Activated CD4-positive, alpha-beta memory T cell treated with anti-CD3 and anti-CD28 coated beads, Interleukin-2, amount 10 ng/mL, durations not matched to agents 7 days and 5 days (primary cell): ENCODE measurements at regions of chr1 and their contacts with region 1.

Region 1: DNA sequence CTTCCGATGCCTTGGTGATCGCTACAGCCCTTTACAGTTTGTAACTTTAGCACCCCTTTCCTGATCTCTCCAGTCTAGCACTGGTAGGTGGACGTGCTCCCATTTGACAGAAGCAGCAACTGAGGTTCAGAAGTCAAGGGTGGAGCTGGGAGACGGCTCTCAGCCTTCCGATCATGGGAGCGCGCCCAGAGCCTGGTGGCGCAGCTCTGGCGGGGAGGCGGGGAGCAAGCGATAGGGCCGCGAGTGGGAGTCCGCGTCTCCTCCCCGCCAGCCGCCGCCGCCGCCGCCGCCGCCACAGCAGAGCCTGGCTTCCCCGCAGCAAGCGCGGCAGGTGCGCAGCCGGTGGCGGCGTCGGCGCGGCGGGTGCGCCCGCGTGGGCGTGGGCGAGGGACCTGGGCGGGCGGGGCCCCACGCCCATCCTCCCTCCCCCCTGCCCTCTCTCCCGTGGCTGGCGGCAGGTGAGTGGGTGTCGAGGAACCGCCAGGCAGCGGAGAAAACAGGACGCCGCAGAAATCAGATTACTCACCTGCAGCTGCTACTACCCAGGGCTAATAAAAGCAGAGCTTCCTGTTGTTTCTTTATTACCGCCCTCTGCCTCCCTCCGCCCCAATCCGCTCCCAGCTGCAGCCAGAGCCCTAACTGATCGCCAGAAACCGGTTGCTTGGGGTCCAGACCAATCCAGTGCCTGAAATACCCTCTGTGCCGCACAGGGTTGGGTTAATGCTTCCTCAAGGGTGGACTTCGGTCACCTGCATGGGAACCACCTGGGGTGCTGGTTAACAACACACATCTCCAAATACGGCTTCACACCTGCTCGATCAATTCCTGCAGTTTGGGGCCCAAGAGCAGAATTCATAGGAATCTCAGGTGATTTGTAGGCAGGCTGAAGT is 60.2 kb upstream of the ID3 start:
- DNase-seq: peak; percentile 76
- H3K4me3 Mint-ChIP-seq: peak overlapping the region; percentile 67
- H3K27ac Mint-ChIP-seq: peak overlapping the region; percentile 70
- H3K4me1 Mint-ChIP-seq: peaks cover 53% of the 10 kb centered on the region
- H3K27me3 Mint-ChIP-seq: peaks cover 15% of the 10 kb centered on the region

Region 2: GRCh38 chr1:23585447-23586015 is 34.0 kb before region 1 on chr1:
- CTCF ChIA-PET with region 1: no interaction called
- POLR2A ChIA-PET with region 1: no interaction called
- DNase-seq: no peak
- H3K4me3 Mint-ChIP-seq: no peak overlapping the region
- H3K27ac Mint-ChIP-seq: no peak overlapping the region
- H3K4me1 Mint-ChIP-seq: peaks cover 4% of the 10 kb centered on the region
- H3K27me3 Mint-ChIP-seq: peaks cover 6% of the 10 kb centered on the region

Region 3: DNA sequence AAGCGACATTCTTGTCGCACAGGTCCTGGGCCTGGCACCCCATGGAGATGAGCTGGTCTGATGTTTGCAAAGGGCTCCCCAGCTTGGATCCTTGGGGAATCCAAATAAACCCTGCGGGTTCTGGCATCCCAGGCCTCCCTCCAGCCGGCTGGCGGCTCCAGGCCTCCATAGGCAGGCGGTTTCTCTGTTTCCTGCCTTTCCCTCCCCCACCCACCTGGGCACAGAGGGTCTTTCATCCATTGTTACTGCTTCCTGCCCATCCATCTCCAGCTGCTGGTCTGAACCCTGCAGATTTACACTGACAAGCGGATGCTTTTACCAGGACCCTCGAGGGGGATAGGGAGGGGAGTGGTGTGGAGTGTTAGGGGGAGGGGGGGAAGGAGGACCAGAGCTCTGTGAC is 21.1 kb before region 1 on chr1:
- CTCF ChIA-PET with region 1: interaction called, 3 read pairs
- POLR2A ChIA-PET with region 1: interaction called, 16 read pairs
- DNase-seq: no peak
- H3K4me3 Mint-ChIP-seq: no peak overlapping the region
- H3K27ac Mint-ChIP-seq: no peak overlapping the region
- H3K4me1 Mint-ChIP-seq: peaks cover 48% of the 10 kb centered on the region
- H3K27me3 Mint-ChIP-seq: no peaks in the 10 kb centered on the region

Region 4: GRCh38 chr1:23673086-23673813 is 53.7 kb after region 1 on chr1:
- CTCF ChIA-PET with region 1: no interaction called
- POLR2A ChIA-PET with region 1: no interaction called
- DNase-seq: peak; percentile 38
- H3K4me3 Mint-ChIP-seq: no peak overlapping the region
- H3K27ac Mint-ChIP-seq: no peak overlapping the region
- H3K4me1 Mint-ChIP-seq: no peaks in the 10 kb centered on the region
- H3K27me3 Mint-ChIP-seq: peaks cover 10% of the 10 kb centered on the region